ENCODE measurements at regions of chr21 and their contacts with region 1.

Region 1: DNA sequence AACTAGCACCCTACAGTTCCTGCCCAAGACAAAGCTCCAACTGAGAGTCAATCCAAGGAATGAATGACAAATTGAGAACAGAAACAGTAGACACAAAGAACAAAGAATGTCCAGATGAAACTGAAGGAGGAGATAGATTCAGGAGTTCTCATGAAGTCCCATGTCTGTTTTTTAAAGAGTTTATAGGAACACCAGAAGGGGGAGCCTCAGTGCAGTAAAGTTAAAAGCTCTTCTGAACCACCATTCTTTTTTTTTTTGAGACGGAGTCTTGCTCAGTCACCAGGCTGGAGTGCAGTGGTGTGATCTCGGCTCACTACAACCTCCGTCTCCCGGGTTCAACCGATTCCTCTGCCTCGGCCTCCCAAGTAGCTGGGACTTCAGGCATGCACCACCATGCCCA is 323.6 kb downstream of the MRPL39 start:
- DNase-seq: peak; percentile 7
- H3K4me3 ChIP-seq: no peak overlapping the region
- H3K27ac ChIP-seq: no peak overlapping the region
- H3K27me3 ChIP-seq: no peaks in the 10 kb centered on the region
- CTCF ChIP-seq: peak; percentile 53

Region 2: GRCh38 chr21:24861471-24861870 is 422.2 kb before region 1 on chr21:
- CTCF ChIA-PET with region 1: no interaction called
- POLR2A ChIA-PET with region 1: no interaction called
- DNase-seq: no peak
- H3K4me3 ChIP-seq: no peak overlapping the region
- H3K27ac ChIP-seq: no peak overlapping the region
- H3K27me3 ChIP-seq: no peaks in the 10 kb centered on the region
- CTCF ChIP-seq: no peak

Region 3: DNA sequence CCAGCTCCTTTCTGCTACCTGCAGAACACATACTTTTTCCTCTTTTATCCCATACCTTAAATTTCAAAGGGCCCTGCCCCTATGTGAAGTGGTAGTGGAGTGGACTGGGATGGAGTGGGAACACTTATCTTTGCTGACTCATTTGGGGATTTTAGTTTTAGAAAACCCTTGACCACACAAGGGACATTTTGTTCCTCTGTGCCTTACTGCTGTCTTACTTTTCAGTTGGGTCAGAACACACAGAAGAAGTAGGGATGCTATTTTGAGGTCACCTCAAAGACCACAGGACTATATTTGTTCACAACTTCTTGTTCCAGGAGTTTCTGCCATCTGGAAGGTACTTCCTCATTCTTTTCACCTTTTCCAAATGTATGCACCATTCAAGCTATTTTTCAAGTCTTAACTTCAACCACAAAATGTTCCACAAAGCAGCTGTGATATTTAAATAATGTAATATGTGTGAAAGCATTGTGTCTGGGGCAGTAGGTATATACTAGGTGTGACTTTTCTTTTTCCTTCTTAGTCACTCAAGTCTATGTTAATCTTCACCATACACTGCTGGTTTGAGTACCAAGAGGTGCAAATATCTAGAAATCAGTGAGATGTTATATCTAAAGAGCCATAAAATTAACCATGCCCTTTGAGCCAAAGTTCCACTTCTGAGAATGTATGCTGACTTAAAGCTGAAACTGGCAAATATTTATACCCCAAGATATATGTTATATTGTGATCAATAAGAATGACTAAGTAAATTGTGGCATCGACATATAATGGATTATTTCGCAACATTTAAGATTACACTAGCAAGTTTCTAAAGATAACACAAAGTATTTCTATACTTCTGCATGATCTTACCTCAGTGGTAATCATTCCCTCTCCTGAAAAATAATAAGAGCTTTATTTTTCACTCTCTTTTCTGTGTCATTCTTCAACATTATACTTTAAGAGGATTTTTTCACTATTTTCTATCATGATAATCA is 15.1 kb after region 1 on chr21:
- CTCF ChIA-PET with region 1: interaction called, 11 read pairs
- POLR2A ChIA-PET with region 1: no interaction called
- DNase-seq: no peak
- H3K4me3 ChIP-seq: no peak overlapping the region
- H3K27ac ChIP-seq: no peak overlapping the region
- H3K27me3 ChIP-seq: no peaks in the 10 kb centered on the region
- CTCF ChIP-seq: no peak

Measured in AG04450 (cell line).